Left ventricle myocardium inferior (tissue), 1 donor: ENCODE measurements at regions of chr1 and their contacts with region 1.

Region 1: DNA sequence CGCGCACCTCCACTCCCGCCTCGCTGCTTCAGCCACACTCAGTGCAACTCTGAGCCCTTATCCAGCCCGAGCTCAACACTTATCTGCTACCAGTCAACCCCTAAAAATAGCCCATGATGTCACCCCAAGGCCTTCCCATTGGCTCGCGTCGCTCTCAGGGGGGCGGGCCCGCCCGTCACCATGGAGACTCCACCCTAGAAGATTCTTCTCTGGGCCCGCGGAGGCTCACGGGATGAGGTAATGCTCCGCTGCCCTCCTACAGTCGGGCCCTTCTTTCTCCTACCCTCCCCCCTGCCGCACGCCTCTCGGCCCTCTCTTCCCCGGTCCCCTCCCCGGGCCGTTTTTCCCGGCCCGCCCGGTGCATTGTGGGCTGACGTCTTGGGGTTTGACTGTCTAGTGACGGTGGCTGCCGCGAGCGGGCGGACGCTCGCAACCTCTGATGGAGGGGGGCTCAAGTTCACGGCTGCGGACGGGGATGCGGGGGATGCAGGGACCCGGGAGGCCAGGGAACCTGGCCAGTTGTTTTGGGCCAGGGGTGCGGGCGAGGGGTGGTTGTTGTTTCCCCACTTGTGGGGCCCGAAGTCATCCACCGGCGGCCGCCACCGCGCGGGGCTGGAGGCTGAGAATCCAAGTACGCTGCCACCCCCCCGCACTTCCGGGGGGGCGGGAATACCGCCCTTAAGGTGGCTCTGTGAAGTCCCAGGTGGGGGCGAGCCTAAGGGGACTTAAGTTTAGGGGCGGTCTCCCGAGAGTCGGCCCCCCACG is at the start of gene JUN:
- DNase-seq: peak; percentile 100
- H3K4me3 ChIP-seq: peak within 1 kb of the TSS; percentile 94
- H3K27ac ChIP-seq: peak within 1 kb of the TSS; percentile 99
- H3K4me1 ChIP-seq: peaks cover 58% of the 10 kb centered on the region
- H3K27me3 ChIP-seq: no peaks in the 10 kb centered on the region
- CTCF ChIP-seq: no peak
- total RNA-seq, gene JUN: 101 TPM

Region 2: DNA sequence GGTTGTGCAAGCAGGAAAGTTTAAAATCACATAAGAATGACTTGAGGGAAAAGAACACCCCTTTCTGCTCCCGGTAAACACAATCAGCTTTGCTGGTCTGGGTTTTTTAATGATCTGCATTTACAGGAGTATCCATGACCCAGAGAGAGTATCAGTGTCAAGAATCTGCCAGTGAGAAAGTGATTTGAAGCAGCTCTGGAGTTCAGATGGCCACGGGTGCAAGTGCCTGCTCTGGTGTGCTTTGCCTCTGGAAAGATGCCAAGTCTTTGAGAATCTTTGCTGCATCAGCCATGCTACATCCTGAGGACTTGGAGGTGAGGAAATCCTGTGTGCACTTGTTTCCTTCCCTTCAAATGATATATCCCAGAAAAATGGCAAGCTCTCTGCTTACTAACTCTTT is 65.7 kb before region 1 on chr1:
- intact Hi-C with region 1: no loop called
- DNase-seq: no peak
- H3K4me3 ChIP-seq: peak overlapping the region; percentile 11
- H3K27ac ChIP-seq: peak overlapping the region; percentile 74
- H3K4me1 ChIP-seq: peaks cover 40% of the 10 kb centered on the region
- H3K27me3 ChIP-seq: no peaks in the 10 kb centered on the region
- CTCF ChIP-seq: no peak

Region 3: DNA sequence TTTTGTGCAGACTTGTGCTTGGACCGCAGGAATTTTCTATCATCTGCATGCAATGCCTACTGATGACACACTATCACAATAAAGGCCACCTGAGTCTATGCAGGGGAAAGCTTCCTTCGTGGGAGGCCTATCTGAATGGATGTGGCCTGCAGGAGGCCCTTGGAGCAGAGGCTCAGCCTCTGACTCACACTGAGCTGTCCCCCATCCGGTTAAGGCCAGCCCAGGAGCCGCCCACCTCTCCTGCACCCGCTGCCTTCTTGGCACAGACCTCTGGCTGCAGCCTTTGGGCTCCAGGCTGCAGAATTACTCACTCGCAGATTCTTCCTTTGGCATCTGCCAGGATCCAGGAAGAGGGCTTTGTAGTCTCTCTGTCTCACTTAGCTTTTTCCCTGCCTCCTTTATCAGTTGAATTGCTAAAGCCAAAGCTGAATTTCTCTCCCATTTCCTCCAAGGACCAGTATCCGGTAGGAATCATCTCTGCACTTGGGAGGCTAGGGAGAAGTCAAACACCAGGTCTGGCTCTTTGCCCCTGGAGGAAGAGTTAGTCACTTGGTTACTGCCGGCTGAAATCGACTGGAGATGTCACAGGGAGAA is 64.7 kb after region 1 on chr1:
- intact Hi-C with region 1: no loop called
- DNase-seq: peak; percentile 63
- H3K4me3 ChIP-seq: no peak overlapping the region
- H3K27ac ChIP-seq: peak overlapping the region; percentile 65
- H3K4me1 ChIP-seq: peaks cover 18% of the 10 kb centered on the region
- H3K27me3 ChIP-seq: no peaks in the 10 kb centered on the region
- CTCF ChIP-seq: no peak

Region 4: GRCh38 chr1:58903514-58904298 is 119.5 kb after region 1 on chr1:
- intact Hi-C with region 1: loop called (anchors 10 kb)
- DNase-seq: peak; percentile 96
- H3K4me3 ChIP-seq: peak overlapping the region; percentile 69
- H3K27ac ChIP-seq: peak overlapping the region; percentile 97
- H3K4me1 ChIP-seq: peaks cover 35% of the 10 kb centered on the region
- H3K27me3 ChIP-seq: no peaks in the 10 kb centered on the region
- CTCF ChIP-seq: peak; percentile 22

Region 5: GRCh38 chr1:59146651-59147358 is 362.6 kb after region 1 on chr1:
- intact Hi-C with region 1: loop called (anchors 10 kb)
- DNase-seq: peak; percentile 66
- H3K4me3 ChIP-seq: peak overlapping the region; percentile 72
- H3K27ac ChIP-seq: peak overlapping the region; percentile 88
- H3K4me1 ChIP-seq: peaks cover 68% of the 10 kb centered on the region
- H3K27me3 ChIP-seq: no peaks in the 10 kb centered on the region
- CTCF ChIP-seq: peak; percentile 45

Region 6: GRCh38 chr1:59296358-59297256 is 512.4 kb after region 1 on chr1 and contains the start of gene FGGY:
- intact Hi-C with region 1: loop called (anchors 10 kb)
- DNase-seq: peak; percentile 98
- H3K4me3 ChIP-seq: peak within 1 kb of the TSS; percentile 73
- H3K27ac ChIP-seq: peak within 1 kb of the TSS; percentile 99
- H3K4me1 ChIP-seq: peaks cover 47% of the 10 kb centered on the region
- H3K27me3 ChIP-seq: no peaks in the 10 kb centered on the region
- CTCF ChIP-seq: no peak
- total RNA-seq, gene FGGY: 31.2 TPM

Region 7: GRCh38 chr1:59699227-59699847 is 915.2 kb after region 1 on chr1:
- intact Hi-C with region 1: loop called (anchors 10 kb)
- DNase-seq: no peak
- H3K4me3 ChIP-seq: no peak overlapping the region
- H3K27ac ChIP-seq: peak overlapping the region; percentile 45
- H3K4me1 ChIP-seq: peaks cover 43% of the 10 kb centered on the region
- H3K27me3 ChIP-seq: no peaks in the 10 kb centered on the region
- CTCF ChIP-seq: peak; percentile 97